ENCODE measurements at regions of chrX and their contacts with region 1.

Region 1: DNA sequence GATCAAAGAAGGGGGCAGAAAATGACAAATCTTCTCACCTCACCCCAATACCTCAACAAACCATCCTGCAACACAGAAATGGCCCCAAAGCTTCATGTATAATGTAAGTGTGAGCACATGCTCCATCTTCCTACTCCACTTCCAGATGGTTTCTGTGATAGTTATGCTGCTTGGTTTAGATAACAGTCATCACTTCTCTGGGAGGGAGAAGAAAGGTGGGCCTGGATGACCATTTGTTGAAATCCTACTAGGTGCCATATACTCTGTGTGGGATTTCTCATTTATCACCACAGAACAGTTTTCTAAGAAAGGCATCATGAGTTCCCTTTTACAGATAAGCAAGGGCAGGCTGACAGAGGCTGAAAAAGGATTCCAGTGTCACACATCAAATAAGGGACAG is 31.3 kb upstream of the NXF3 start:
- DNase-seq: no peak
- ATAC-seq: no peak
- H3K4me3 ChIP-seq: no peak overlapping the region
- H3K27ac ChIP-seq: no peak overlapping the region
- H3K4me1 ChIP-seq: no peaks in the 10 kb centered on the region
- H3K27me3 ChIP-seq: no peaks in the 10 kb centered on the region
- CTCF ChIP-seq: no peak

Region 2: GRCh38 chrX:101176439-101176838 is 1947.8 kb before region 1 on chrX:
- intact Hi-C with region 1: loop called in 1 of 10 experiments (anchors 5 kb)
- DNase-seq: no peak
- ATAC-seq: no peak
- H3K4me3 ChIP-seq: no peak overlapping the region
- H3K27ac ChIP-seq: no peak overlapping the region
- H3K4me1 ChIP-seq: no peaks in the 10 kb centered on the region
- H3K27me3 ChIP-seq: no peaks in the 10 kb centered on the region
- CTCF ChIP-seq: no peak

Region 3: DNA sequence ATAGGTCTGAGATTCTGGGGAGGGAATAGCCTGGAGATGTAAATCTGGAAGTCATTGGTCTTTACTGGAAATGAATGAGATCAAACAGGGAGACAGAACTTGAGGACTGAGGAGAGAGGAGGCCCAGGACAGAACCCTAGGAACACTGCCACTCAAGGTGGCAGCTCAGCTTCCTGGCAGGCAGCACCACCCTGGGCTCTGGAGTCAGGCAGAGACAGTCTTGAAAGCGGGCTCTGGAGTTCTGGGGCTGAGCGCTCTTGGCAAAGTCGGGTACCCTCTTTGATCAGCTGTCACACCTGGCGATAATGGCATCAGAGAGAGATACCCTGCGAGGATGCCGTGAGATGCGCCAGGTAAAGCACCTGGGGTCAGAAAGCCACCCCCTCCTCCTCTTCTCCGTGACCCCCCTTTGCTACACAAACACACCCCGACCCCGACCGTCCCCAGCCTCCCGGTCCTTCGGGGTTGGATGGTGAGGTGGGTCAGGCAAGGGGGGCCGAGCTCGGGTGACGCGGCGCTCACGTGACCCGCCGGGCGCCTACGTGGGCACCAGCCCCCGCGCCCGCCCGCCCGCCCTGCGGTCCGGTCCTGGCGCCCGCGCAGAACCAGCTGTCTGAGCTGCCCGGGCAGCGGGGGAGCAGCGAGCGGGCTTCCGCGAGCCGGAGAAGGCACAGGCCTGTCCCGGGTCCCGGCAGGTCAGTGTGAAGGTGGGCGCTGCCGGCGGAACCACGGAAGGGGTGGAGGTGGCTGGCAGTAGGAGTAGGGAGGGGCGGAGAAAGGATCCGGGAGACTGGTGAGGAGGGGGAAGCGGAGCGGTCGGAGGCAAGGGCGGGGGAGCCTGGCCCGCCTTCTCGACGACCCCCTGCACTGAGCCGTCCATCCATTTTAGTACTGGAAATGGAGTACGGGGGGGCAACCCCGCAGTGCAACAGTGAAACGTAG is 483.4 kb after region 1 on chrX and contains the start of gene TCEAL3:
- intact Hi-C with region 1: no loop called
- DNase-seq: peak; percentile 23 to 56
- ATAC-seq: peak; percentile 87 to 96 (median 93)
- H3K4me3 ChIP-seq: peak within 1 kb of the TSS; percentile 38 to 72 (median 70)
- H3K27ac ChIP-seq: peak within 1 kb of the TSS; percentile 61 to 92 (median 88)
- H3K4me1 ChIP-seq: peaks cover 0 to 13% (median 0%) of the 10 kb centered on the region in 9 donors
- H3K27me3 ChIP-seq: peaks cover 0 to 34% (median 0%) of the 10 kb centered on the region in 7 donors
- CTCF ChIP-seq: no peak
- total RNA-seq, gene TCEAL3: 16.7 to 25.5 (median 22.0) TPM